ENCODE measurements at regions of chr19 and their contacts with region 1.

Region 1: DNA sequence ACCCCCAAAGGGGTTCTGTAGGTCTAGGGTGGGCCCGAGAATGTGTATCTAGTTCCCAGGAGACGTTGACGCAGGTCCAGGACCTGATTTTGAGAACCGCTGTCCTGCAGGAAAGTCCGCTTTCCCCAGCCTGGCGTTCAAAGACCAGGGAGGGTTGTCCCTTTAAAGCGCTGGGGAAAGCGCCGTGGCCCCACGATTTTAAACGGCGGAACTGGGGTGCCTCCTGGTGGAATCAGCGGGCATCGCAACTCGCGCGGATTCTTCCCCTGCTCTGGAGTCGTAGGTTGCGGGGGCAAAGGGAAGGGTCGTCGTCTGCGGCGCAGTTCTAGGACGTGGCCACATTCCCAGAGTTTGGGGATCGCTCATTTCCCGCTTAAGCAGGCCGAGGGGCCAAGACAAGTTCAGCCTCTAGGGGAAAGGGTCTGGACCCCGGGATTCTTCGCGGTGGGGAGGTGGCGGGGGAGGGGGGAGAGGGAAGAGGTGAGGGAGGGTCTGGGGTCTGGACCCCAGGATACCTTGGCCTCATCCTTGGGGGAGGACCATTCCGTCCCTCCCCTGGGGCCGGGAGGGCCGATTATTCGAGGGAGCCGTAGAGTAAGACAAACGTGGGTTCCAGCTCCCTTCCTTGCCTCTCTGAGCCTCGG is 7.7 kb downstream of the PNMA8B start:
- DNase-seq: no peak
- H3K4me3 ChIP-seq: peak overlapping the region; percentile 36 to 39
- H3K27ac ChIP-seq: peak overlapping the region; percentile 29
- H3K4me1 ChIP-seq: peaks cover 40% of the 10 kb centered on the region
- H3K27me3 ChIP-seq: no peaks in the 10 kb centered on the region
- CTCF ChIP-seq: peak; percentile 97 to 99 (median 99)
- POLR2A ChIP-seq: no peak

Region 2: DNA sequence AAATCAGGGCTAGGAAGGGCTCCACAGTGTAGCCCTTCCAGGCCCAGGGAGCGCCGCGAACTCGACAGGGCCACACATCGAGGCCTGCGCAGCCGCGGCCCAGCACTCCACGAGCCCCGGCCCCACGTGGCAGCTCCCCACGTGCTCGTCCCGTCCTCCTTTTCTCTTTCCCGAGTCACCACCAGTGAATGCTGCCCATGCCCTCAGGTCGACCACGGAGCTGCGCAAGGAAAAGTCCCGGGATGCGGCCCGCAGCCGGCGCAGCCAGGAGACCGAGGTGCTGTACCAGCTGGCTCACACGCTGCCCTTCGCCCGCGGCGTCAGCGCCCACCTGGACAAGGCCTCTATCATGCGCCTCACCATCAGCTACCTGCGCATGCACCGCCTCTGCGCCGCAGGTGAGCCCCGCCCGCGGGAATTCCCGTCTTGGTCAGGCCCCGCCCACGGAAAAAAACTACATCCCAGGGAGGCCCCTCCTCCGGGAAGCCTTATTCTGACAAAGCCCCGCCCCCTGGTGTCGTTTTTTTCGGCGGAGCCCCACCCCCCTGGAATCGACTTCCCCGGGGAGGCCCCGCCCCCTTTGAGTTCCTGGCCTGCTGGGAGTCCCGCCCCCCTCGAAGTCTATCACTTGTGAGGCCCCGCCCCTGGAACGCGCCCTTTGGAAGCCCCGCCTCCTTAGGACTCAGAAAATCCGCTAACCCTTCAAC is 184.1 kb before region 1 on chr19:
- intact Hi-C with region 1: no loop called
- DNase-seq: no peak
- H3K4me3 ChIP-seq: no peak overlapping the region
- H3K27ac ChIP-seq: peak overlapping the region; percentile 51
- H3K4me1 ChIP-seq: peaks cover 52% of the 10 kb centered on the region
- H3K27me3 ChIP-seq: no peaks in the 10 kb centered on the region
- CTCF ChIP-seq: no peak
- POLR2A ChIP-seq: no peak

Region 3: GRCh38 chr19:46392243-46392801 is 95.6 kb before region 1 on chr19:
- intact Hi-C with region 1: loop called (anchors 2 kb)
- DNase-seq: no peak
- H3K4me3 ChIP-seq: no peak overlapping the region
- H3K27ac ChIP-seq: peak overlapping the region; percentile 14
- H3K4me1 ChIP-seq: peaks cover 8% of the 10 kb centered on the region
- H3K27me3 ChIP-seq: no peaks in the 10 kb centered on the region
- CTCF ChIP-seq: no peak
- POLR2A ChIP-seq: no peak